A673 (cell line): ENCODE measurements at regions of chr17 and their contacts with region 1.

Region 1: GRCh38 chr17:77247048-77247541 is 106.3 kb downstream of the SEC14L1 start:
- DNase-seq: peak; percentile 91
- H3K4me3 ChIP-seq: peak overlapping the region; percentile 54
- H3K27ac ChIP-seq: peak overlapping the region; percentile 57
- H3K4me1 ChIP-seq: peaks cover 8% of the 10 kb centered on the region
- H3K27me3 ChIP-seq: no peaks in the 10 kb centered on the region
- CTCF ChIP-seq: peak; percentile 89

Region 2: DNA sequence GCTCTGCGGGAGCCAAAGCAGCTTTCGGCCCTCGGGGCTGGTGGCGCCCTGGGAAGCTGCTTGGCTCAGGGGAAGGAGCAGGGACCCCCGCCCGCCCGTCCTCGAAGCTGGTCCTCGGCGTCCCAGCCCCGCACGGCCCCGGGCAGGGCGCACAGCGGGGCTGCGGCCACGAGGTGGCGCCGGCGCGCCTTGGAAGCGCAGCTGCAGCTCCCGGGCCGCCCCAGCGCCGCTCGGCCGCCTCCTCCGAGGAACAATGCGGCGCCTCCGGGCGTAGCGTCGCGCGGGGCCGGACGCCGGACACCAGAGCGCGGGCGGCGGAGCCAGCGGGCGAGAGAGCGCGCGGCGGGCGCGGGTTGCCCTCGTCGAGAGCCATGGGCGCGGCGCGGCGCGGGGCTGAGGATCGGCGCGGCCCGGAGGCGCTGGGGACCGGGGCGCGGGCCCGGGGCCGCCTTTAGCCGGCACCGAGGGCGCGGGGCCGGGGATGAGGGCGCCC is 378.9 kb before region 1 on chr17 and contains the start of gene MGAT5B:
- CTCF ChIA-PET with region 1: no interaction called
- POLR2A ChIA-PET with region 1: no interaction called
- intact Hi-C with region 1: loop called (anchors 10 kb)
- DNase-seq: peak; percentile 81
- H3K4me3 ChIP-seq: peak within 1 kb of the TSS; percentile 44
- H3K27ac ChIP-seq: no peak within 1 kb of the TSS
- H3K4me1 ChIP-seq: peaks cover 9% of the 10 kb centered on the region
- H3K27me3 ChIP-seq: peaks cover 17% of the 10 kb centered on the region
- CTCF ChIP-seq: peak; percentile 59
- total RNA-seq, gene MGAT5B: 1.1 and 3.7 TPM in 2 replicates

Region 3: DNA sequence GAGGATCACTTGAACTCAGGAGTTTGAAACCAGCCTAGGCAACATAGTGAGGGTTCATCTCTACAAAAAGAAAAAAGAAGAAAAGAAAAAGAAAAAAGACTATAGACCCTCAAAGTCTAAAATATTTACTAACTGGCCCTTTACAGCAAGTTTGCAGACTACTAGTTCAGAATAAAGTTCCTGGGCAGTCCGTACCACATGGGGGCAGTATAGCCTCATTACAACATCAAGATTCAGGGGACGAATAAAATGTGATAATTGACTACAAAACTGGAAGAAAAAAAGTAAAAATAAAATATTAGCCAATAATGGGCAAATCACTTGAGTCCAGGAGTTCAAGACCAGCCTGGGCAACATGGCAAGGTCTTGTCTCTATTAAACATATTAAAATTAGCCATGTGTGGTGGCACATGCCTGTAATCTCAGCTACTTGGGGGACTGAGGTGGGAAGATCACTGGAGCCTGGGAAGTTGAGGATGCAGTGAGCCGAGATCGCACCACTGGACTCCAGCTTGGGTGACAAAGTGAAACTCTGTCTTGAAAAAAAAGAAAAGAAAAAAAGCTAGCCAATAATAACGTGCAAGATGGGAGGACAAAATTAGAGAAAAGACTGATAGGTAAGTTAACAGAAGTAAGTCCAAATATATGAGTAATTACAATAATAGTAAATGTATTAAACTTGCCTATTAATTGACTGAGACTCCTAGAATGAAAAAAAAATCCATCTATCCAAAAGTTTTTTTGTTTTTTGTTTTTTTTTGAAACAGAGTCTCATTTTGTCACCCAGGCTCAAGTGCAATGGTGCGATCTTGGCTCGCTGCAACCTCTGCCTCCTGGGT is 235.7 kb before region 1 on chr17:
- CTCF ChIA-PET with region 1: no interaction called
- POLR2A ChIA-PET with region 1: no interaction called
- intact Hi-C with region 1: loop called (anchors 5 kb)
- DNase-seq: peak; percentile 73
- H3K4me3 ChIP-seq: no peak overlapping the region
- H3K27ac ChIP-seq: no peak overlapping the region
- H3K4me1 ChIP-seq: no peaks in the 10 kb centered on the region
- H3K27me3 ChIP-seq: no peaks in the 10 kb centered on the region
- CTCF ChIP-seq: peak; percentile 82

Region 4: GRCh38 chr17:77088455-77089123 is 158.5 kb before region 1 on chr17:
- CTCF ChIA-PET with region 1: interaction called, 3 read pairs
- POLR2A ChIA-PET with region 1: no interaction called
- intact Hi-C with region 1: loop called (anchors 1 kb)
- DNase-seq: peak; percentile 98
- H3K4me3 ChIP-seq: peak overlapping the region; percentile 79
- H3K27ac ChIP-seq: peak overlapping the region; percentile 93
- H3K4me1 ChIP-seq: peaks cover 14% of the 10 kb centered on the region
- H3K27me3 ChIP-seq: no peaks in the 10 kb centered on the region
- CTCF ChIP-seq: peak; percentile 83

Region 5: GRCh38 chr17:77354420-77355241 is 107.5 kb after region 1 on chr17:
- CTCF ChIA-PET with region 1: no interaction called
- POLR2A ChIA-PET with region 1: no interaction called
- intact Hi-C with region 1: no loop called
- DNase-seq: peak; percentile 40
- H3K4me3 ChIP-seq: no peak overlapping the region
- H3K27ac ChIP-seq: no peak overlapping the region
- H3K4me1 ChIP-seq: peaks cover 32% of the 10 kb centered on the region
- H3K27me3 ChIP-seq: no peaks in the 10 kb centered on the region
- CTCF ChIP-seq: no peak